Activated CD4-positive, alpha-beta memory T cell treated with anti-CD3 and anti-CD28 coated beads for 36 hours (primary cell): ENCODE measurements at regions of chr1 and their contacts with region 1.

Region 1: DNA sequence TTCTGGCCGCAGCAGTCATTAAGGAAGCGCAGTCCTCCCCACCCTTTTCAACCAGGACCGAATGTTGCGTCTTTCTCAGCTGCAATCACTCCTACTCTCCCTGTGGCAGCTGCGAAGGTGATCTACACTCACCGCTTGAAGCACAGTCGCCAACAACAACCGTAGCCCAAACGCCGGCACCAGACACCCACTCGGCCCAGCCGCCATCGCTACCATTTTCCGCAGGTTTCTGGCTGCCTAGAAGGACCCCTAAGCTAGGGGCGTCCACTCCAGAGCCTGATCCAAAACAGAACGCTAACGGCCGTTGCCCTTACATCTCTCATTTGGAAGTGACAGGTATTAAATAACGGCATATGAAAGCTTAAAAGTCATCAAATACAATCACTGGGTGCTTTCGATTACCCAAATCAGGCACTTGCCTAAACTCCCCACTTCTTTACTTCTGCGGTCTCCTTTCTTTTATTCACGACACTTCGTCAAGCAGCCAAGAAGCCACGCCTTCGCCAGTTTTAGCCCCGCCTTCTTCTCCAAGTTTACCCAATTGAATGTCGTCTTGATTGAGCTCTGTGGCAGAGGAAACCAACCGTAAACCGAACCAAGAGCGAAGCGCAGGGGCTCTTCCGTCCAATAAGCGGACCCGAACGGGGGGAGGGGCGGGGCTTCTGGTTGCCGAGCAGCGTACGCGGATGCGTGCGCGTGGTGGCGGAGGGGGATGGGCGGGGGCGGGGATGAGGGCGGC is at the start of gene SELENOF:
- DNase-seq: peak; percentile 99
- H3K4me3 Mint-ChIP-seq: no peak within 1 kb of the TSS
- H3K27ac Mint-ChIP-seq: no peak within 1 kb of the TSS
- H3K4me1 Mint-ChIP-seq: peaks cover 40% of the 10 kb centered on the region
- H3K27me3 Mint-ChIP-seq: no peaks in the 10 kb centered on the region
- total RNA-seq, gene SELENOF: 127 to 139 TPM

Region 2: DNA sequence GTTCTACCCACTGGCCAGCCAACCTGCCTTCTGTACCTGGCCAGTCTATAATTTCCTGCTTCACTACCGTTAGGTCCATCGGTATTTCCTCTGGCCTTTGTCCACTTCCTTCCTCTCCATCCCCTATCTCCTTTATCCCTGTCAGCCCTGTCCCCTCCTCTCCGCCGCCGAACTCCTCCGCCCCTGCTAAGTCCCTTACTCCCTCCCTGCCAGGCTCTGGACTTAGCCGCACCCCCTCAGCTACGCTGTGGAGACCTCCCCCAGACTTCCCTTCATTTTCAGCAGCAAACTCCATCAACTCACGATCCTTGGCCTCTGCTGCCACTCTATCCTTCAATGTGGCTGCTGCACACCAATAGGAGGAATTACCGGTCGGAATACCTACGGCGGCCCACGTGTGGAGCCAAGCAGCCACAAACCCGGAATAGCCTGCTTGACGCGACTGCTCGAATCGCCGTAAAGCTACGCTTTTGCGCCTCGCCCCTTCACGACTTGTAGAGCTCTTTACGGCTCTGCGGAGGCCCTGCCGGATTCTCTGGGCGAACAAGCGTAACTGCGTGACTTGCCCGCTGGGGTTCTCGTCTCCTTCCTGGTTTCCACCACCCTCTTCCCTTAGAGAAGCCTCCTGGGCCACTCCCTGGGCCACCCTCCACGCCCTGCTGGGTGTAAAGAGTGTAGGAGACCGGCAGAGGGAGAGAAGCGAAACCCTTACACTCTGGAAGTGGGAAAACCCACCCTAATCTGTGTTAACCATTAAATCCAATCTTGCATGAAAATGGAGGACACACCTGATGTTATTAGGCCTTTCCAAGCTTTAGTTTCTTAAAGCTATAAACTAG is 1205.9 kb before region 1 on chr1 and contains the start of gene ZNHIT6:
- CTCF ChIA-PET with region 1: no interaction called
- POLR2A ChIA-PET with region 1: no interaction called
- intact Hi-C with region 1: loop called (anchors 2 kb)
- DNase-seq: peak; percentile 93
- H3K4me3 Mint-ChIP-seq: no peak within 1 kb of the TSS
- H3K27ac Mint-ChIP-seq: no peak within 1 kb of the TSS
- H3K4me1 Mint-ChIP-seq: peaks cover 23% of the 10 kb centered on the region
- H3K27me3 Mint-ChIP-seq: no peaks in the 10 kb centered on the region
- total RNA-seq, gene ZNHIT6: 18.7 TPM

Region 3: DNA sequence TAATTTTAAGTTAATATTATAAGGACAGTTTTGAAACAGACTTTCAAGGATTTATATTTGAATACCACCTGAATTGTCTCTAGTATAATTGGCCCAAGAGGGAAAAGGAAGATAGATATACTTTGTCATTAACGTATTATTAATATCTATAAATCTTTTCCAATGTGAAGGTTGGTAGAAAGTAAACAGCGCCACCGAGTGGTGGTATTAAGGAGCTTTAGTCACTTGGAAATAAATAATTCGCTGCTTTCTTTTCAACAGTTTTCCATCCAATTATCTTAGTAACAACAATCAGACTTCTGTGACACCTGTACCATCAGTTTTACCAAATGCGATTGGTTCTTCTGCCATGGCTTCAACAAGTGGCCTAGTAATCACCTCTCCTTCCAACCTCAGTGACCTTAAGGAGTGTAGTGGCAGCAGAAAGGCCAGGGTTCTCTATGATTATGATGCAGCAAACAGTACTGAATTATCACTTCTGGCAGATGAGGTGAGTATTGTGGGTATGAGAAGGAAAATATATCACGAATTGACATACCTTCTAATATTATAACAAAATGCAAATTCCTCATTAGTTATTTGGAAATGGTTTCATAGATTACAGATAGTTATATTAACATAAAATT is 172.0 kb before region 1 on chr1:
- CTCF ChIA-PET with region 1: no interaction called
- POLR2A ChIA-PET with region 1: no interaction called
- intact Hi-C with region 1: loop called (anchors 5 kb)
- DNase-seq: peak; percentile 32
- H3K4me3 Mint-ChIP-seq: no peak overlapping the region
- H3K27ac Mint-ChIP-seq: no peak overlapping the region
- H3K4me1 Mint-ChIP-seq: peaks cover 4% of the 10 kb centered on the region
- H3K27me3 Mint-ChIP-seq: no peaks in the 10 kb centered on the region

Region 4: GRCh38 chr1:87045761-87046304 is 131.8 kb after region 1 on chr1:
- CTCF ChIA-PET with region 1: interaction called, 3 read pairs
- POLR2A ChIA-PET with region 1: interaction called, 11 read pairs
- intact Hi-C with region 1: loop called (anchors 1 kb)
- DNase-seq: peak; percentile 75
- H3K4me3 Mint-ChIP-seq: peak overlapping the region; percentile 45
- H3K27ac Mint-ChIP-seq: peak overlapping the region; percentile 82
- H3K4me1 Mint-ChIP-seq: peaks cover 48% of the 10 kb centered on the region
- H3K27me3 Mint-ChIP-seq: no peaks in the 10 kb centered on the region

Region 5: GRCh38 chr1:87084244-87084836 is 170.3 kb after region 1 on chr1:
- CTCF ChIA-PET with region 1: interaction called, 37 read pairs
- POLR2A ChIA-PET with region 1: no interaction called
- intact Hi-C with region 1: no loop called
- DNase-seq: no peak
- H3K4me3 Mint-ChIP-seq: no peak overlapping the region
- H3K27ac Mint-ChIP-seq: no peak overlapping the region
- H3K4me1 Mint-ChIP-seq: peaks cover 8% of the 10 kb centered on the region
- H3K27me3 Mint-ChIP-seq: no peaks in the 10 kb centered on the region

Region 6: GRCh38 chr1:87535551-87535950 is 621.5 kb after region 1 on chr1:
- CTCF ChIA-PET with region 1: no interaction called
- POLR2A ChIA-PET with region 1: no interaction called
- intact Hi-C with region 1: no loop called
- DNase-seq: no peak
- H3K4me3 Mint-ChIP-seq: no peak overlapping the region
- H3K27ac Mint-ChIP-seq: no peak overlapping the region
- H3K4me1 Mint-ChIP-seq: no peaks in the 10 kb centered on the region
- H3K27me3 Mint-ChIP-seq: peaks cover 4% of the 10 kb centered on the region

Region 7: GRCh38 chr1:88891318-88891950 is 1977.4 kb after region 1 on chr1 and contains the start of gene GTF2B:
- CTCF ChIA-PET with region 1: no interaction called
- POLR2A ChIA-PET with region 1: no interaction called
- intact Hi-C with region 1: loop called (anchors 2 kb)
- DNase-seq: peak; percentile 97
- H3K4me3 Mint-ChIP-seq: peak within 1 kb of the TSS; percentile 81
- H3K27ac Mint-ChIP-seq: peak within 1 kb of the TSS; percentile 84
- H3K4me1 Mint-ChIP-seq: peaks cover 41% of the 10 kb centered on the region
- H3K27me3 Mint-ChIP-seq: peaks cover 2% of the 10 kb centered on the region
- total RNA-seq, gene GTF2B: 34.2 to 39.4 TPM